ENCODE measurements at regions of chr3 and their contacts with region 1.

Region 1: DNA sequence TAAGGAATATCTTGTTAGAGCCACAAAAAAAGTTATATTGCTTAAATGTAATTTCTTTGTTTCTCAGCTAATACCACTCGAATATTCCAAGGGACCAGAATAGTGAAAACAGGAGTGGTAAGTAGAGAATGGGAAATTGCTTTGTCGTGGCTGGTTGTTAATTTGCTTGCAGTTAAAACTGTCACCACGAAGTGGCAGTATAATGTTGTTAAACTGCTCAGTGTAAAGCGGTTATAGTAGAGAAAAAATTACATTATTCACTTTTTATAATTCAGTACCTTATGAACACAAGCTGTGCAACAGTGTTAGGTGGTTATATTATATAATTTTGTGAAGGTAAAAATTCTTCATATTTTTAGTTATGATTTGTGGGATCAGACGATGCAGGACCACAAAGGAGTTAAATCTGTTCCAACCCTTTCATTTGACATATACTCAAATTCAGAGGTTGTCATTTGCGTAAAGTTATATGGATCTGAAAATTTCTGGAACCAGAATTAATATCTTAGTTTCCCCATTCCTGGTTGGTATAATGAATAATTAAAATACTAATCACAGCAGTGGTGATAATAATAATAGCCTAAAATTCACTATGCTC is 171.8 kb downstream of the FEZF2 start:
- ATAC-seq: peak in 7 of 8 experiments; percentile 26 to 68 (median 49)
- H3K4me3 ChIP-seq: no peak overlapping the region
- H3K27ac ChIP-seq: no peak overlapping the region
- H3K4me1 ChIP-seq: peaks cover 0 to 12% of the 10 kb centered on the region in 2 donors

Region 2: DNA sequence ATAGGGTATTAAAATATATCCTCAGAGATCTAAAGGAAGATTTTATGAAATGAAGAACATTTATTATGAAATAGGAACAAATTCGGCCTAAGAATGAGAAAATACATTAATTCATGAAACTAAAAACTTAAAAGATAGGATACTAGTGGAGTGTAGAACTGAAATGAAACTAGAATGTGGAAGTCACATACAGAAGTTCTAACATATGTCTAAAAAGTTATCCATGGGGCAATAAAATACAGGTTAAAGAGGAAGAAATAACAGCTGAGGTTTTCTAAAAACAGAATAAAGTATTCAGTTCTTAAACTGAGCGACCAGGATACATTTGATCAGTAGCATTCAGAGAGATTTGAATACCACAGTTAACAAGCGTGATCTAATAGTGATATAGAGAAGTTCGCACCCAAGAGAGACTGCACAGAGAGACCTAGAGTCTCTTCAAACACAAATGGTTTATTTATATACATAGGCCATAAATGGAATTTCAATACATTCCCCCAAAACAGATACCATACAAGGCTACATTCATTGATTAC is 85.9 kb after region 1 on chr3:
- in situ Hi-C with region 1: no loop called
- ATAC-seq: no peak
- H3K4me3 ChIP-seq: no peak overlapping the region
- H3K27ac ChIP-seq: no peak overlapping the region
- H3K4me1 ChIP-seq: no peaks in the 10 kb centered on the region

Region 3: GRCh38 chr3:62299857-62300406 is 98.4 kb after region 1 on chr3:
- in situ Hi-C with region 1: loop called in 2 of 9 experiments (anchors 10 to 25 kb)
- ATAC-seq: no peak
- H3K4me3 ChIP-seq: no peak overlapping the region
- H3K27ac ChIP-seq: no peak overlapping the region
- H3K4me1 ChIP-seq: no peaks in the 10 kb centered on the region

Region 4: DNA sequence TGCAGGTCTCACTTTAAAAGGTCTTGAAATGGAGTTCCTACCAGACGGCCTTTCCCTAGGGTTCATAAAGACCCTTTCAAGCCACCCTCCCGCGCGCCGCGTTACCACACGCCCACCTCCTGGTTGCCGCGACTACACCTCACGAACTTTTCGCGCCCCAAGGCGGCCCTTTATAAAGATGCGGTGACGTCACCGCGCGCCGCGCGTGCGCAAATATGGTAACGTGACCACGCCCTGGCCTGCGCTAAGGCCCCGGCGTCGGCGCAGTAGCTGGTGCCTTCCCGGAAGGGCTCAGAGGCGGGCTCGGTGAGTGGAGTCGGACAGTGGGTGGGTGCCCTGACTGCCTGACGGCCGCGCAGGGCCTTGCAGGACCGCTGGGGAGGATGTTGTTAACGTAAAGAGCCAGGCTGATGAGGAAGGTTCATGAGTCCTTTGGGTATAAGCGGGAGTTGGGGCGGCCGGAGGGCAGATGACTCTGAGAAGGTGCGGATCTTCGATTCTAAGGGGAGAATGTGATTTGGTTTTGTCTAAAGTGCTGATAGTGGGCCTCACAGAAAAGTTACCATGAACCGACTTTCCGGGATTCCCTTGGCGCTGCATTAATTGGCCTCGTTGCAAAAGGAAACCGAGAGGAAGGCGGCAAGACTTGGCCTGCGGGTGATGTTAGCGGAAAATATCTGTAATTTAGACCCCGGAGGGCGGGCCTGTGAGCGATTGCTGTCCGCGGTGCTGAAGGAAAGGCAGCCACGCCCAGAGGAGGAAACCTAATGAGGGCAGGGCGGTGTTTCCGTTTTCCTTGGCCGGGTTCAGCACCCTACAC is 117.4 kb after region 1 on chr3:
- in situ Hi-C with region 1: loop called in 1 of 9 experiments (anchors 25 kb)
- ATAC-seq: peak; percentile 99 to 100 (median 100)
- H3K4me3 ChIP-seq: peak overlapping the region; percentile 40 to 49 (median 44)
- H3K27ac ChIP-seq: no peak overlapping the region
- H3K4me1 ChIP-seq: no peaks in the 10 kb centered on the region

Region 5: DNA sequence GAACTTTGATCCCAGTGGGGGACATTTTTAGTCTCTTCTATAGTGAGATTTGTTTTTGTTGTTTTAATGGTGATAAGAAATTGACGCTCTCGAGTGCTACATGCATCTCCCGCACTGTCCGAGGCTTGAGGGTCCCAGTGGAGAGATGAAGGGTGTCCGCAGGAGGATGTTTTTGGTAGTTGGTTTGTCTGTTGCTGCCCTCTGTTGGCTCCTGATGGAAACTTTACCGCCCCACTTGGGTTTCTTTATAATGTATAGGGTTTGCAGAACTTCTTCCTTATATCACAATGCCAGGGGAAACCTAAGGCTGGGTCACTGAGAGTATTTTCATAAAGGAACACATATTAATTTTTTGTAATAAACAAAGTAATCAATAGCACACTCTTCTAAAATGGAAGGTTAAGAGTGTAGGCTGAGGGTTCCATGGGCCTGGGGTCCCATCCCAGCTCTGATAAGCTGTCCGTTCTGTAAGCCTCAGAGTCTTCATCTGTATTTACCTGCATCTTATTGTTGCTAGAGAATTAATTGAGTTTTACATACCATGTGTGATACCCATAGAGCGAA is 357.1 kb after region 1 on chr3:
- in situ Hi-C with region 1: loop called in 4 of 9 experiments (anchors 25 kb)
- ATAC-seq: peak in 2 of 8 experiments; percentile 26 to 56
- H3K4me3 ChIP-seq: no peak overlapping the region
- H3K27ac ChIP-seq: no peak overlapping the region
- H3K4me1 ChIP-seq: no peaks in the 10 kb centered on the region